PC-3 (cell line): ENCODE measurements at regions of chr1 and their contacts with region 1.

Region 1: DNA sequence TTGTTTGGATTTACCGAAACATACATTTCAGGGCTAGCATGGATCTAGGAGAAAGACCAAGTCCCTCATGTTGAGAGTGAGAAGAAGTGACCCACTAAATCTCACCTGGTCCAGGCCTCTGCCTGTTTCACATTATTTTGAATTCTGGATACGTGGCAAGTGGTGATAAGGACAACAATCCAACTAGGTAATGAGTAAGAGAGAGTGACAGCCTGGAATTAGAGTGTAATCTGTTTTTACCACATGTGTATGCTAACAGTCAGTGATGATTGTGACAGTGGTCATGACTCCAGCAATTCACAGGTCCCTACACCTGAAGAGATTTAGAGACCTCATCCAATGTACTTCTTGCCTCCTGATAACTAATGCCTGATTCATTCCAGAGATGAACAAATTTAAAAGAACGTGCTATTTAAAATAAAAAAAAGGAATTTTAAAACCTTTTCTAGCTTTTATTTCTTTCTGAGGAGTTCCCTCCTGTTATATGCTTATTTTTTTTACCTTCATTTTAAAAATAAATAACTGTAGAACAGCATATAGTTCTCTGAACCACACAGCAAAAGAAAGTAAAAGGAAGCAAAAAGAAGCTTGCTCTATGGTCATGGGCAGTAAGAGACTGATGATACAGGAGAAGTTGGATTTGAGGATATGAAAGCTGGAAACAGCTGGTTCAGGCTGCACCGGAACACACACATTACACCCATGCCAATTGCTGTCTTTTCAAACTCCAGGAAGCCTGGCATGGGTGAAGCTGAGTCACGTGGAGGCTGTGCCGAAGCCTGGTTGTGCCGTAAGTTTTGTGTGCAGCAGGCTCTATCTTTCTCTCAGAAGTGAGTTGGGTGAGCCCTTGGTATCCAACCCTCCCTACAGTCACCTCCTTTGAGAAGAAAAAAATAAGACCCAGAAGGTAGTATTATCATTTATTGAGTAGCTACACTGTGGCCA is 14.7 kb downstream of the C1orf116 start:
- DNase-seq: peak; percentile 97
- ATAC-seq: peak; percentile 50
- H3K4me3 ChIP-seq: no peak overlapping the region
- H3K27ac ChIP-seq: peak overlapping the region; percentile 95
- H3K4me1 ChIP-seq: peaks cover 55% of the 10 kb centered on the region
- H3K27me3 ChIP-seq: no peaks in the 10 kb centered on the region
- CTCF ChIP-seq: no peak

Region 2: GRCh38 chr1:206725109-206725963 is 292.6 kb before region 1 on chr1:
- CTCF ChIA-PET with region 1: interaction called, 10 read pairs
- POLR2A ChIA-PET with region 1: no interaction called
- intact Hi-C with region 1: no loop called
- DNase-seq: peak; percentile 69
- ATAC-seq: peak; percentile 47
- H3K4me3 ChIP-seq: no peak overlapping the region
- H3K27ac ChIP-seq: no peak overlapping the region; the same call in 1 of the 2 replicates
- H3K4me1 ChIP-seq: peaks cover 29% of the 10 kb centered on the region
- H3K27me3 ChIP-seq: no peaks in the 10 kb centered on the region
- CTCF ChIP-seq: peak; percentile 89

Region 3: GRCh38 chr1:207004981-207005830 is 12.7 kb before region 1 on chr1:
- CTCF ChIA-PET with region 1: interaction called, 9 read pairs
- POLR2A ChIA-PET with region 1: interaction called, 52 read pairs
- intact Hi-C with region 1: loop called (anchors 1 kb)
- DNase-seq: peak; percentile 97
- ATAC-seq: peak; percentile 33
- H3K4me3 ChIP-seq: no peak overlapping the region
- H3K27ac ChIP-seq: peak overlapping the region; percentile 92
- H3K4me1 ChIP-seq: peaks cover 82% of the 10 kb centered on the region
- H3K27me3 ChIP-seq: no peaks in the 10 kb centered on the region
- CTCF ChIP-seq: peak; percentile 98

Region 4: GRCh38 chr1:207032528-207033017 is 14.7 kb after region 1 on chr1 and contains the start of gene C1orf116:
- CTCF ChIA-PET with region 1: interaction called, 8 read pairs
- POLR2A ChIA-PET with region 1: interaction called, 97 read pairs
- intact Hi-C with region 1: loop called (anchors 1 kb)
- DNase-seq: peak; percentile 99
- ATAC-seq: peak; percentile 63
- H3K4me3 ChIP-seq: peak within 1 kb of the TSS; percentile 69
- H3K27ac ChIP-seq: peak within 1 kb of the TSS; percentile 95
- H3K4me1 ChIP-seq: peaks cover 88% of the 10 kb centered on the region
- H3K27me3 ChIP-seq: no peaks in the 10 kb centered on the region
- CTCF ChIP-seq: no peak
- total RNA-seq, gene C1orf116: 34.9 and 36.2 TPM in 2 replicates

Region 5: GRCh38 chr1:207077470-207078377 is 59.8 kb after region 1 on chr1:
- CTCF ChIA-PET with region 1: no interaction called
- POLR2A ChIA-PET with region 1: no interaction called
- intact Hi-C with region 1: loop called (anchors 2 kb)
- DNase-seq: peak; percentile 98
- ATAC-seq: peak; percentile 68
- H3K4me3 ChIP-seq: no peak overlapping the region
- H3K27ac ChIP-seq: peak overlapping the region; percentile 3; the same call in 1 of the 2 replicates
- H3K4me1 ChIP-seq: peaks cover 37% of the 10 kb centered on the region
- H3K27me3 ChIP-seq: no peaks in the 10 kb centered on the region
- CTCF ChIP-seq: peak; percentile 99

Region 6: GRCh38 chr1:207336559-207337467 is 318.9 kb after region 1 on chr1:
- CTCF ChIA-PET with region 1: no interaction called
- POLR2A ChIA-PET with region 1: no interaction called
- intact Hi-C with region 1: no loop called
- DNase-seq: peak; percentile 97
- ATAC-seq: peak; percentile 98
- H3K4me3 ChIP-seq: no peak overlapping the region
- H3K27ac ChIP-seq: peak overlapping the region; percentile 74
- H3K4me1 ChIP-seq: peaks cover 21% of the 10 kb centered on the region
- H3K27me3 ChIP-seq: no peaks in the 10 kb centered on the region
- CTCF ChIP-seq: no peak